ENCODE measurements at regions of chr4 and their contacts with region 1.

Region 1: GRCh38 chr4:127965062-127965802 is at the starts of genes ABHD18 and MFSD8:
- DNase-seq: peak; percentile 99
- ATAC-seq: peak; percentile 95
- H3K4me3 ChIP-seq: peak within 1 kb of the TSS; percentile 98 to 99
- H3K27ac ChIP-seq: peak within 1 kb of the TSS; percentile 87
- H3K4me1 ChIP-seq: peaks cover 5 to 14% of the 10 kb centered on the region in 2 experiments; a peak in 3 of 4 replicates
- H3K27me3 ChIP-seq: no peaks in the 10 kb centered on the region
- CTCF ChIP-seq: peak in 2 of 3 experiments; percentile 41 to 46; a peak in 4 of 6 replicates
- POLR2A ChIP-seq: peak; percentile 87
- RAD21 ChIP-seq: peak; percentile 48; the same call in 1 of the 2 replicates
- total RNA-seq, gene ABHD18: 9.7 TPM
- total RNA-seq, gene MFSD8: 17.1 TPM

Region 2: DNA sequence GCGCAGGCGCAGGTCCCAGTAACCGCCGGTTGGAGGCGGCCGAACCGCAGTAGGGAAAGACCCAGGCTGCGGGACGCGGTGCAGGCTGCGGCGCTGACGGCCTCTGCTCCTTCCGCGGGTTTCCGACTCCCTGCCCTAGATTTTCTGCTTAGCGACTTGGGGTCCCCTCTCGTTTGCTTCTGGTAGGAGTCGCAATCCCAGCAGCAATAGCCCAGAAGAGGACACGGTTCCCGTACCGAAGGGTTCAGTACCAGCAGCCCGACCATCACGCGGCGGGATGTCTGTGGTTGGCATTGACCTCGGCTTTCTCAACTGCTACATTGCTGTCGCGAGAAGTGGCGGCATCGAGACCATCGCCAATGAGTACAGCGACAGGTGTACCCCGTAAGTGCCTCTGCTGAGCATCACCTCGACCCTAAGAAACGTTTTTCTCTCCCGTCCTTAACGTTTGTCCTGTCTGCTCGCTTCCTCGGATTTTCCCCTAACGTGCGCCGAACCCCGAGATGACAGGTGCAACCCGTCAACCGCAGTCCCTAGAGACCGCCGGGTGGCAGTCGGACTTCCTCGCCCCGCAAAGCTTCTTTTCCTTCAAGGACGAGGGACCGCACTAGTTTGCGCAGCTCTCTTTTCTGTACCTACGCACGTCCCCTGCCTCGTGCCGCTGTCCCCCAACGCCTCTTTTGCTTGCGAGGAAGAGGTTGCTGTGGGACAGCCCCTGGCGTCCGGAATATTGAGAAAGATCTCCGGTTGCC is 182.8 kb before region 1 on chr4 and contains the start of gene HSPA4L:
- CTCF ChIA-PET with region 1: no interaction called
- POLR2A ChIA-PET with region 1: interaction called, 4 read pairs
- RAD21 ChIA-PET with region 1: no interaction called
- intact Hi-C with region 1: loop called (anchors 1 kb)
- DNase-seq: peak; percentile 63
- ATAC-seq: peak; percentile 73
- H3K4me3 ChIP-seq: peak within 1 kb of the TSS; percentile 71 to 83
- H3K27ac ChIP-seq: peak within 1 kb of the TSS; percentile 43
- H3K4me1 ChIP-seq: peaks cover 11 to 27% of the 10 kb centered on the region in 2 experiments; a peak in 3 of 4 replicates
- H3K27me3 ChIP-seq: no peaks in the 10 kb centered on the region
- CTCF ChIP-seq: peak in 1 of 3 experiments; percentile 33; a peak in 1 of 6 replicates
- POLR2A ChIP-seq: peak; percentile 91
- RAD21 ChIP-seq: peak; percentile 53
- total RNA-seq, gene HSPA4L: 18.6 TPM

Region 3: DNA sequence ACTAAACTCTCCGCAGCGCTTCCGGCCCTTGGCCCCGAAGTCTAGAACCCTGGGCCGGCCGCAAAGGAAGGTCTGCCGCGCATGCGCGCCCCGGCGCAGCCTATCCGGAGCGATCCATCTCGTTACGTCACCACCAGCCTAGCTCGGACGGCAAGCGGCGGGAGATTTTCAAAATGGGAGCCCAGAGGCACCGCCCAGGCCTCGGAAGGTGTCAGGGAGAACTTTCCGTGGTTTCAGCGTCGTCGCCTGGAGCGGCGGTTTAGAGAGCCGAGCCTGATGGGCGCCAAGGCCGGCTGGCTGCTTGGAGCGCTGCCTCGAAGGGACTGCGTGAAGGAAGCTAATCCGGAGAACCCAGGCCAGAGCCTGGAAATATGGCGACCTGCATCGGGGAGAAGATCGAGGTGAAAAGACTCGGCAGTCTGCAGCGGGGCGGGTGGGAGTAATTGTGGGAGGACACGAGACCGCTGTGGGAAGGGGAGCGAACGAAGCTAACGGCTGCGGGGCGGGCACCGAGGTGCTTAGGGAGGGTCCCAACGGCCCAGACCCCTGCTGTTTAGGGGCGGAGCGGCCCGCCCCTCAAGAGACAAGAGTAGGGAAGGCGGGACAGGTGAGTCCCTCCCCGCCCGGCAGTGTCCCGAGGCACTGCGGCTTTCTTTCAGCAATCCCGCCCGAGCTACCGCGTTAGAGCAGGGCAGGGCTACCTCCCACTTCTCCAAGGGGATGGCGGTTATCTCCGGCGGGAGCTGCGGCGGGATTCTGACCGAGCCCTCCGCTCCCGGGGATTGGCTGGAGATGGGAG is 84.3 kb before region 1 on chr4 and contains the start of gene PLK4:
- CTCF ChIA-PET with region 1: no interaction called
- POLR2A ChIA-PET with region 1: interaction called, 5 read pairs
- RAD21 ChIA-PET with region 1: interaction called in 1 of 2 experiments, 3 read pairs
- intact Hi-C with region 1: loop called (anchors 5 kb)
- DNase-seq: peak; percentile 94
- ATAC-seq: peak; percentile 89
- H3K4me3 ChIP-seq: peak within 1 kb of the TSS; percentile 64 to 90
- H3K27ac ChIP-seq: peak within 1 kb of the TSS; percentile 91
- H3K4me1 ChIP-seq: peaks cover 5 to 13% of the 10 kb centered on the region in 2 experiments
- H3K27me3 ChIP-seq: no peaks in the 10 kb centered on the region
- CTCF ChIP-seq: no peak
- POLR2A ChIP-seq: peak; percentile 60
- RAD21 ChIP-seq: no peak
- total RNA-seq, gene PLK4: 34.8 TPM

Region 4: GRCh38 chr4:128060699-128061565 is 95.7 kb after region 1 on chr4 and contains the start of gene LARP1B:
- CTCF ChIA-PET with region 1: interaction called, 3 read pairs
- POLR2A ChIA-PET with region 1: interaction called, 3 read pairs
- RAD21 ChIA-PET with region 1: interaction called, 3 to 4 read pairs
- intact Hi-C with region 1: loop called (anchors 2 kb)
- DNase-seq: peak; percentile 87
- ATAC-seq: peak; percentile 88
- H3K4me3 ChIP-seq: peak within 1 kb of the TSS; percentile 71 to 77
- H3K27ac ChIP-seq: peak within 1 kb of the TSS; percentile 92
- H3K4me1 ChIP-seq: peaks cover 9 to 20% of the 10 kb centered on the region in 2 experiments; a peak in 3 of 4 replicates
- H3K27me3 ChIP-seq: no peaks in the 10 kb centered on the region
- CTCF ChIP-seq: no peak
- POLR2A ChIP-seq: peak; percentile 83
- RAD21 ChIP-seq: no peak
- total RNA-seq, gene LARP1B: 31.1 TPM